Activated naive CD4-positive, alpha-beta T cell treated with anti-CD3 and anti-CD28 coated beads, Interleukin-2, amount 10 ng/mL, durations not matched to agents 7 days and 5 days (primary cell): ENCODE measurements at regions of chr14 and their contacts with region 1.

Region 1: DNA sequence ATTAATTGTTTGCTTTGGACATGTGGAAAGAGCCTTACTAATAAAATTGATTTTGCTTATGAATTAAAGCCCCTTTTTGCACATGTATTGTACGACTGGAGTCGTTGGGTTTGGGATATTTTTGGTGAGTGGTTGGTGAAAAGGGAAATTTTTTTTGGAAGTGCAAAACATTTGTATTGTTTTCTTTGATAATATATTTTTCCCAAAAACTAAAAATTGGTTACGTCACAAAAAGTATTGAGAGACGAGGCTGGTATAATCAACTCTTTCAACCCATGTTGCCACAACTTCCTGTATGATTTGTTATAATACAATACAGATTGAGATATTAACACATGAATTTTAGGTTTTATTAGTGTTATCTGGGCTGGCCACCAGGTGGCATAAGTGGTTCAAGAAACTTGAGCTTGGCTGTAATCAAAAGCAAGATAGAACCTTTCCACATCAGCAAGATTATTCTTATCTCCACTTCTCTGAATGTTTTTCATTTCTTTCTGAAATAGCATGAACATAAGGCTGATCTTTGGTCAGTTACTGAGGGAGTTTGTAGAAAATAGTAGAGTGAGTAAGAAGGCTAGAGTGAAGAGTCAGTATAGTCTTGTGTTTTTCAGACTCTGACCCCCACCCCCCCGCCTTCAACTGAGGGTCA is 8.7 kb downstream of the NGDN start:
- DNase-seq: peak; percentile 79
- H3K4me3 Mint-ChIP-seq: no peak overlapping the region
- H3K27ac Mint-ChIP-seq: no peak overlapping the region
- H3K4me1 Mint-ChIP-seq: peaks cover 2% of the 10 kb centered on the region
- H3K27me3 Mint-ChIP-seq: no peaks in the 10 kb centered on the region

Region 2: DNA sequence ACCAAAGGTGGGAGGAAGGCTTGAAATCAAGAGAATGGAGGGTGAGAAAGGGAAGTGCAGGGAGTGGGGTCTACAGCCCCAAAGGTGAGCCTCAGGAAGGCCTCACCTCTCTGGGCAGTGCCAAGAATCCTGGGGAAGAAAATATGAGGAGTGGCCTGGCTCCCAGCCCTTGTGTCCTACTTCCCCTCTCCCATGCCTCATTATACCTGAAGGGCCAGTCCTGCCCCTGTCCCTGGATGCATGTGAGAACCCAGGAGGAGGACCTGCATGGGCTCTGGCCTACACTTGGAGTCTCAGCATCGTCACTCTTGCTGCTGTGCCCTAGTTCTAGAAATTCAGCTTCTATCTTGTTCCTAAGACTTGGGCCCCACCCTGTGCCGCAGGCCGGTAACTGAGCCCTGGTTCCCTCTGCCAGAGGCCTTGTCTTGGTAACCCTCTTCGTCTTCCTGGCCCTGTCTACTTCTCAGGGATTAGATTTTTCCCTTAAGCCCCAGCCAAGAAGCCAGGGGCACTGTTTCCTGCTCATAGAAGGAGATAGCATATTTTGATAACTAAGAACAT is 31.9 kb before region 1 on chr14:
- CTCF ChIA-PET with region 1: no interaction called
- DNase-seq: no peak
- H3K4me3 Mint-ChIP-seq: no peak overlapping the region
- H3K27ac Mint-ChIP-seq: no peak overlapping the region
- H3K4me1 Mint-ChIP-seq: peaks cover 2% of the 10 kb centered on the region
- H3K27me3 Mint-ChIP-seq: peaks cover 29% of the 10 kb centered on the region

Region 3: DNA sequence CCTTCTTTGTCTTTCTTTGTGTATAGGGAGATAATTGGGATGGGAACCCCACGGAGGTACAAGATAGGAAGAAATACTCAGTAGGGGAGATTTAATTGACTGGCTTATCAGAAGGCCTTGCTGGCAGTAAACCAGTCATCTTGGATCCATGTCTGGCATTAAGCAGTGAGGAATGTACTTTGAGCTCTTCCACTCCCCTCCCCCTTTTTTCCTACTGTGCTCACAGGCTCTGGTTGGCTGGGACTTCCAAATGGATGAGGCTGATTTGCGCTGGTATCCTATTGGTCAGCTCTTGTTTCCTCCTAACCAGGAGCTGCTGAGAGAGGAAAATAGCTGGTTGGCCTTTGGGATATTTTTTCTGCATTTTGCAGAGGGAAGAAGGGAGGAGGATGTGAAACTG is 16.0 kb after region 1 on chr14:
- CTCF ChIA-PET with region 1: interaction called, 17 read pairs
- DNase-seq: no peak
- H3K4me3 Mint-ChIP-seq: no peak overlapping the region
- H3K27ac Mint-ChIP-seq: no peak overlapping the region
- H3K4me1 Mint-ChIP-seq: no peaks in the 10 kb centered on the region
- H3K27me3 Mint-ChIP-seq: no peaks in the 10 kb centered on the region

Region 4: GRCh38 chr14:24171422-24172260 is 693.4 kb after region 1 on chr14 and contains the start of gene REC8:
- CTCF ChIA-PET with region 1: no interaction called
- DNase-seq: peak; percentile 81
- H3K4me3 Mint-ChIP-seq: peak within 1 kb of the TSS; percentile 71
- H3K27ac Mint-ChIP-seq: peak within 1 kb of the TSS; percentile 85
- H3K4me1 Mint-ChIP-seq: peaks cover 49% of the 10 kb centered on the region
- H3K27me3 Mint-ChIP-seq: no peaks in the 10 kb centered on the region